ENCODE measurements at regions of chr1 and their contacts with region 1.

Region 1: DNA sequence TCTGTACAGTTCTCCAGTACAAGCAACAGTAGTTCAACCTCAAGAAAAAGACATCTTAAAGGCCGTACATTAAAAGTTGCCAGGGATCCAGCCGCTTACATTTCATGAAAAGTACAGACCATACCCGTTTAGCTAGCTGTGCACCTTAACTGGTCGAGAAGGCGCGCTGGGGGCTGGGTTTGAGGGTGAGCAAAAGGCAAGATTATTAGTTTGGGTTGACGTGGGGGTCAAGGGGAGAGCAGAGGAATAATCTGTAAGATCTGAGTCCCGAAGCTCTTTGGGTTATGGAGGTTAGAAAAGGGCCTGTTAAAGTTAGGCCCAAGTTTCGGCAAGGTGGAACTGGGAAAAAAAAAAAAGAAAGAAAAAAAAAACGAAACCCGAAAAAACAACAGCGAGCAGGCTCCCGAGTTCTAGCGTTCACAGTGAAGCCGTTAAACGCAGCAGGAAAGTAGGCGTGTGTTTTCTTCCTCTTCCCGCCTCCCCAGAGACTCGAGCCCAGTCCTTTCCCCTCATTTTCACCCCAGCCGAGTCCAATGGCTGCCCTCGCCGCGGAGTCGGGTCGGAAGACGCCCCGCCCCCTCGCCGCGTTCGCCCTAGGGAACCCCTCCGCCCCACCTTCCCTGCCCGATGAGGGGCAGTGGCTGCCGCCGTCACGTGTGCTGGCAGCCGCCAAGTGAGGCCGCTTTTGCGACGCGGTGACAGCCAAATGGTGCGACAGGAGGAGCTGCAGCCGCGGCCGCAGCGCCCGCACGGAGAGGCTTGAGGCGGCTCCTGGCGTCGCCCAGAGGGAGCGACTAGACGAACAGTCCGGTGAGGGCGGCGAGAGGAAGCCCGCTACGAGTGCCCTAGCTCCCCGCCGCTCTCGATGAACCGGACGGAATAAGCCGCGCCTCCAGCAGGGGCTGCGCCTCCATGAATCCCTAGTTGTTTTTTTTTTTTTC is at the start of gene PKN2:
- DNase-seq: peak; percentile 97 to 98
- H3K4me3 ChIP-seq: peak within 1 kb of the TSS; percentile 98
- H3K27ac ChIP-seq: peak within 1 kb of the TSS; percentile 90
- H3K4me1 ChIP-seq: peaks cover 36% of the 10 kb centered on the region
- H3K27me3 ChIP-seq: no peaks in the 10 kb centered on the region
- CTCF ChIP-seq: no peak; the same call in 1 of the 2 replicates
- total RNA-seq, gene PKN2: 79.3 and 81.8 TPM in 2 replicates

Region 2: DNA sequence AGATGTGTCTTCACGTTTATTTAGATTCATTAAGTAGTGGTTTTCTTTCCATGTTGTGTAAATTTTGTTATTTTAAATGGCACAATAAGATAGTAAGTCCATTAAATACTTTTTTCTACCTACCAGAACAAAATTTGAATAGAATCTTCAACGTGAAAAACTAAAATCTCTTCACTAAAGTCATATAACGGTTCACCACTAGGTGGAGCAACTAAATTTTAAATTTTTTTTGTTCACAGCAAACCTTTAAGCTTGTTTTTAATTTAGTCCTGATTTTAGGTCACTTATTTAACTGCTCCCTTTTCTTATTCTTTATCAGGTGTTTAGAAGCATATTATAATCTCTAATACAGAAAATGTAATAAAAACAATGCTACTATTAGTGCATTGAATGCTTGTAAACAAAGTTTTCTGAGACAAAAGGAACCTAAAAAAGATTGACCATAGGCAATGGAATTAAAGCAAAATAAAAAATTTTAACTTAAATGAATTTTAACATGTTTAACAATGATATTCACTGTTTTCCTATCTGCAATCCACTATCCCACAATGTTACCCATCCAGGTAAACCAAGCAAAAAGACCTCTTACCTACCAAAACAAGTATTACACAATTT is 28.0 kb before region 1 on chr1:
- CTCF ChIA-PET with region 1: interaction called, 4 read pairs
- POLR2A ChIA-PET with region 1: interaction called, 10 read pairs
- intact Hi-C with region 1: no loop called
- DNase-seq: no peak
- H3K4me3 ChIP-seq: no peak overlapping the region
- H3K27ac ChIP-seq: no peak overlapping the region
- H3K4me1 ChIP-seq: peaks cover 16% of the 10 kb centered on the region
- H3K27me3 ChIP-seq: no peaks in the 10 kb centered on the region
- CTCF ChIP-seq: peak; percentile 93

Region 3: DNA sequence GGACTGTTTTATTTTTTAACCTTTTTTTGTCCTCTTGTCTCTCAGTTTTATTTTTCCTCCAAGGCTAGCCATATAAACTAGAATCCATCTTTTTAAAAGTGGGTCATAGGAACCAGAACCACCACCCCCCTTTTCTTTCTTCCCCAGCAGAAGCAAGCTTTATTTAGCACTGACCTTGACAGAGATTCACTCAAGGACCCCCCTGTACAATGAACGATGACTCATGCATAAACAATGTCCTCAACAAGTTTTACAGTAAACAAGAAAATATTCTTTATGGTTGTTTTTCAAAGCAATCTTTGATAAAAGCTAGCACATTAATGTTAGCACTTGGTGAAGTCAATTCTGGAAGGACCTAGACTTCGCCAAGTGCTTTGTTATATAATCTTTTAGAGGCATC is 14.3 kb after region 1 on chr1:
- CTCF ChIA-PET with region 1: interaction called, 5 read pairs
- POLR2A ChIA-PET with region 1: interaction called, 23 read pairs
- intact Hi-C with region 1: no loop called
- DNase-seq: no peak
- H3K4me3 ChIP-seq: 0 out of 2 replicates have a peak overlapping the region, but pooled peaks have one; percentile 6
- H3K27ac ChIP-seq: peak overlapping the region; percentile 30
- H3K4me1 ChIP-seq: peaks cover 28% of the 10 kb centered on the region
- H3K27me3 ChIP-seq: no peaks in the 10 kb centered on the region
- CTCF ChIP-seq: no peak

Region 4: DNA sequence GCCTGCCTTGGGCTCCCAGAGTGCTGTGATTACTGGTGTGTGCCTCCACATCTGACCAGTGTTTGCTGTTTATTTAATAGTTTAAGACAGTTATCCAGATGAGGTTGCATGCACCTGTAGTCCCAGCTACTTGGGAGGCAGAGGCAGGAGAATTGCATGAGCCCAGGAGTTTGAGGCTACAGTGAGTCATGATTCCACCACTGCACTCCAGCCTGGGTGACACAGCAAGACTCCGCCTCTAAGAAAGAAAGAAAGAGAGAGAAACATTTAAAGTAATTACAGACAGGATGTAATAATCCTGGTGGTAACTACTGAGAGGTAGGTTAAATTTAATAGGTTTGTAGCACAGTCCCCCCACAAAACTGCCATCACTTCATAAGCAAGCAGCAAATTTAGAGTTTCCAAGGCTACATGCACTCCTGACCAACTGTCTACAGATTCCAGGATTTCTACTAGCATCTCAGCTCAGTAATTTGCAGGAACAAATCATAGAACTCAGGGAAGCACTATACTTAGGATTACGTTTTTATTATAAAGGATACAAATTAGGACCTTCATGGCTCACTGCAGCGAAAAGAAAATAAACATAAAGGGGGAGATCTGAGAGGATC is 89.8 kb after region 1 on chr1:
- CTCF ChIA-PET with region 1: interaction called, 7 read pairs
- POLR2A ChIA-PET with region 1: interaction called, 3 read pairs
- intact Hi-C with region 1: loop called (anchors 1 kb)
- DNase-seq: peak; percentile 65 to 93
- H3K4me3 ChIP-seq: peak overlapping the region; percentile 26; the same call in 1 of the 2 replicates
- H3K27ac ChIP-seq: peak overlapping the region; percentile 98
- H3K4me1 ChIP-seq: peaks cover 39% of the 10 kb centered on the region
- H3K27me3 ChIP-seq: no peaks in the 10 kb centered on the region
- CTCF ChIP-seq: no peak; the same call in 1 of the 2 replicates

Region 5: DNA sequence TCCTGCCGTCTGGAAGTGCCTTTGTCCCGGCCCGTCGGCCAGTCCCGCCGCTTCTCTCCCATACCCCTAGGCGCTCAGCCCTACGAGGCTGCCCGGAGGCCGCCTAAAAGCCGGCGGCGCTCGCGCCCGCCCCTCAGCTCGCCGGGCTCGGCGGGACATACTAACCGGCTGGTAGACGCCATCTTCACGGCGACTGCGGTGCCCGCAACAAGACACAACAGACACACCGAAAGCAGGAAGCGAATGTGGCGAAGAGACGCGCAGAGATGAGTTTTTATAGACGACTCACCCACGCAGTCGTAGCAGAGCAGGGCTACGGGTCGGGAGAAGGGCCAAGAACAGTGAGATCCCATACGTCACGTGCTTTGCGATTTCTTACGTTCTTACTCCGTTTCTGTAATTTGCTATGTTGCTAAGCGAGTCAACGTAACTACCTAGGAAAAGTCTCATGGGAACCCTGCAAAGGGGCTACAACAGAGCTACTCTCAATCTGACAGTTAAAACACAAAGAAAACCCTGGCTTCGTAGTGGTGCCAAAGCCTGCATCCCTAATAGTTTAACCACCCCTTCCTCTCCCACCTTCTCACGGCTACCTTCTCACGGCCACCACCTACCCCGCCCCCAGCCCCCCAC is 207.6 kb after region 1 on chr1 and contains the start of gene GTF2B:
- CTCF ChIA-PET with region 1: interaction called, 5 read pairs
- POLR2A ChIA-PET with region 1: interaction called, 5 read pairs
- intact Hi-C with region 1: loop called (anchors 5 kb)
- DNase-seq: peak; percentile 86 to 90
- H3K4me3 ChIP-seq: peak within 1 kb of the TSS; percentile 93
- H3K27ac ChIP-seq: peak within 1 kb of the TSS; percentile 73
- H3K4me1 ChIP-seq: peaks cover 20% of the 10 kb centered on the region
- H3K27me3 ChIP-seq: no peaks in the 10 kb centered on the region
- CTCF ChIP-seq: no peak
- total RNA-seq, gene GTF2B: 18.3 and 21.9 TPM in 2 replicates